Calu3 (cell line): ENCODE measurements at regions of chr21 and their contacts with region 1.

Region 1: DNA sequence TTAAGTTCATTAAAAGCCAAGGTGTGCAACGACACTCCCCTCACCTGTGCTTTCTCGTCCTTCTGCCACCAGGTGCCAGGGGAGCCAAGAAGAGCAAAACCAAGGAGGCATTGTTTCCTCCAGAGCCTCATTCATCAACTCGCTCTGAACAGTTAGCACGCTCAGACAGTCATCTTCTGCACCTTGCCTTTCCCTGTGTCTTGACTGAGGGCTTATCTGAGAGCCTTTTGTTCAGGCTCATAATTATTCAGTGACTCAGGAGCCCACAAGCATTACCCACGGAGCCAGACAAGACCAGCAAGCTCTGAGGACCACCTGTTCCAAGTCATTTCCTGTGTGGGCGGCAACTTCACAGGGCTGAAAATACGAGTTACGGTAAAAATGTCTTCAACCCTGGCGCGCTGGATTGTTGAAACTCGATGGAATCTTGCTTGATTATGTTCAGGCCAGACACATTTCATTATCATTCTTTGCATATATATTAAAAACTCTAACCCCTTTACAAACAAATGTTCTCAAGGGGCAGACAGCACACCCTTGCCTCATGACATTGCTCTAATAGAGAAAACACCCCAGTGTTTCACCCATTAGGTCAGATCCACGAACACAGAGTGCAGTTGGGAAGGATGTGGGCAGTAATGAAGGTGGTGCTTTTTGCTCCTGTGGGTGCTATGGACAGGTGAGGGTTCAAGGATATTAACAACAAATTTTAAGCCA is 89.7 kb upstream of the RUNX1 start:
- DNase-seq: peak; percentile 78
- H3K4me3 Mint-ChIP-seq: no peak overlapping the region
- H3K27ac Mint-ChIP-seq: peak overlapping the region; percentile 95
- H3K4me1 Mint-ChIP-seq: peaks cover 39% of the 10 kb centered on the region
- H3K27me3 Mint-ChIP-seq: no peaks in the 10 kb centered on the region
- CTCF ChIP-seq: no peak

Region 2: DNA sequence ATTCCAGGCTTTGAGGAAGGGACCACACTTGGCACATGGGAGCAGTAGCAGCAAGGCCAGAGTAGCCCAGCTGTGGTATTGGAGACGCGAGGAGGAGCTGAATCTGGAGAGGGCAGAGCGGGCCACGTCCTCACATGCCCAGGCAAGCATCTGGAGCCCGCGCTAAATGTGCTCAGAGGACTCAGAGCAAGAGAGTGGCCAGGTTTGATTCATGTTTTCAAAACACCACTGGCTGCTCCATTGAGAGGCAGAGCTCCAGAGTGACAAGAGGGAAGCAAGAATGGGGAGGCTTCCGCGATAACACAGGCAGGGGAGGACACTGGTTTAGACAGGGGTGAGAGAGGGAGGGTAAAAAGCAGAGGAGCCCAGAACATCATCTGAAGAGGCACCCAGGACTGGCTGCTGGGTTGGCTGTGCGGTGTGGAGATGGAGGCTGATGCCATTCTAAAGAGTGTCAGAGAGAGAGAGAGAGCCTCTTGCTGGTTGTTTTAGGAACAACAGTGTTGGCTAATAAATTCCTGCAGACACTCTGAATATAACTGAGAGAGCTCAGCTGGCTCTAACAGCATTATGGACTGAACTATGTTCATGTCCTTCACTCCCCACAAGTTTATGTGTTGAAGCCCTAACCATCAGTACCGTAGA is 556.2 kb before region 1 on chr21:
- CTCF ChIA-PET with region 1: no interaction called
- intact Hi-C with region 1: no loop called
- DNase-seq: peak; percentile 34
- H3K4me3 Mint-ChIP-seq: no peak overlapping the region
- H3K27ac Mint-ChIP-seq: peak overlapping the region; percentile 21
- H3K4me1 Mint-ChIP-seq: peaks cover 9% of the 10 kb centered on the region
- H3K27me3 Mint-ChIP-seq: no peaks in the 10 kb centered on the region
- CTCF ChIP-seq: no peak

Region 3: GRCh38 chr21:35217504-35218060 is 78.8 kb after region 1 on chr21:
- CTCF ChIA-PET with region 1: interaction called, 4 read pairs
- intact Hi-C with region 1: loop called (anchors 1 kb)
- DNase-seq: peak; percentile 79
- H3K4me3 Mint-ChIP-seq: no peak overlapping the region
- H3K27ac Mint-ChIP-seq: peak overlapping the region; percentile 95
- H3K4me1 Mint-ChIP-seq: peaks cover 46% of the 10 kb centered on the region
- H3K27me3 Mint-ChIP-seq: no peaks in the 10 kb centered on the region
- CTCF ChIP-seq: no peak

Region 4: DNA sequence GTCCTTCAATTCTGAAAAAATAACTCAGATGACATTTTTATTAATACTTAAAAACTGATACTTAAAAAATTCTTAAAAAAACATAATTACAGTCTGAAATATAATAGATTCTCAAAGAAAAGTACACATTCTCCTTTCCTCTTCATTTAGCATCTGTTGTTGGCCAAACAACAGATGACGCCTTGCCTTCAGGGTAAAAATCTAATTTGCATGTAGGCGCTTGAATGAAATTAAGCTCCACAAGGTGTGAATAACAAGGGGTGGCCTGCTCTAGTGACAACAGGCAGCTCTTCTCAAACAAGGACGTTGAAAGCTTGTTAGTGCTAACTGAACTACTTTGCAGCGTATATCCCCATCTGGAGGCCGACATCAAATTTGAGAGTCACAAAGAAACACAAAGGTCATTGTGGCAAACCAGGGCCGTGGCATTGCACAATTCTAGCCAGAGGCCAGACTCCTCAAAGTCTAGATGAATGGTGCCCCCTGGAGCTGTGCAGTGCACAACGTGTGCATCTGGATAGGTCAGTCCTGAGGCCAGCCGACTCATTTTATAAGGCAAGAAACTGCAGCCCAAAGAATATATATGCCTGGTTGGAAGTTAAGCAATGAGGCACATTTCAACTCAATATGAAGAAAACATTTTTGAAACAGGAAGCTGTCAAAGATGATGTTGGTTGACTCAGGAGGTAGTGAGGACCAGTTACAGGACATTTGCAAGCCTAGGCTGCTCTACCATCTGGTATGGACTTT is 369.5 kb after region 1 on chr21:
- CTCF ChIA-PET with region 1: interaction called, 4 read pairs
- intact Hi-C with region 1: loop called (anchors 2 kb)
- DNase-seq: peak; percentile 68
- H3K4me3 Mint-ChIP-seq: no peak overlapping the region
- H3K27ac Mint-ChIP-seq: no peak overlapping the region
- H3K4me1 Mint-ChIP-seq: peaks cover 47% of the 10 kb centered on the region
- H3K27me3 Mint-ChIP-seq: no peaks in the 10 kb centered on the region
- CTCF ChIP-seq: peak; percentile 25